Activated B cell treated with CpG ODN at 0.5 μM for 24 hours (primary cell): ENCODE measurements at regions of chr3 and their contacts with region 1.

Region 1: DNA sequence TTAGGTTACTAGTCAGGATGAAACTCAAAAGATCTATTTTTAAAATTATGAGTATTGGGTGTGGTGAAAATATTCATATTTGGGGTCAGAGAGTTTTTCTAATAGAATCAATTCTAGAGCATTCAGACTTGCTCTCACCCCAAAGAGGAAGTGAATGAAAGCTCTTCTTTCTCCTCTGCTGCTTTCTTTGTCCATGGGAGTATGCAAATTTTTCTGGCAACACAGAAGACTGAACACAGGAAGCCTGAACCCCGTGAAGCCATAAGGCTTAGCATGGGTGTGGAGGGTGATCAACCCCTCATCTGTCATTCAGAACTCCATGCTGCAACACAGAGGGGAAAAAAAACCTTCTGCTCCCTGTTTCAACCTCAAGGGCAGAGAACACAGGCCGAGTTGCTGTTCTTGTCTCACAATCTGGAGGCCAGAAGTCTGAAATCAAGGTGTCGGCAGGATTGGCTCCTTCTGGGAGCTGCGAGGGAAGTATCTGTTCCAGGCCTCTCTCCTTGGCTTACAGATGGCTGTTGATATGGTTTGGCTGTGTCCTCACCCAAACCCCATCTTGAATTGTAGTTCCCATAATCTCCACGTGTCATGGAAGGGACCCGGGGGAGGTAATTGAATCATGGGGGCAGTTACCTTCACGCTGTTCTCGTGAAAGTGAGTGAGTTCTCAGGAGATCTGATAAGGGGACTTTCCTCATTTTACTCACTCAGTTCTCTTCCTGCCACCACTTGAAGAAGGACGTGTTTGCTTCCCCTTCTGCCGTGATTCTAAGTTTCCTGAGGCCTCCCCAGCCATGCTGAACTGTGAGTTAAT is 33.7 kb upstream of the CD47 start:
- DNase-seq: peak; percentile 61
- ATAC-seq: peak; percentile 64
- H3K4me3 Mint-ChIP-seq: peak overlapping the region; percentile 83
- H3K27ac Mint-ChIP-seq: peak overlapping the region; percentile 100
- H3K4me1 Mint-ChIP-seq: peaks cover 91% of the 10 kb centered on the region
- H3K27me3 Mint-ChIP-seq: no peaks in the 10 kb centered on the region
- CTCF ChIP-seq: no peak

Region 2: DNA sequence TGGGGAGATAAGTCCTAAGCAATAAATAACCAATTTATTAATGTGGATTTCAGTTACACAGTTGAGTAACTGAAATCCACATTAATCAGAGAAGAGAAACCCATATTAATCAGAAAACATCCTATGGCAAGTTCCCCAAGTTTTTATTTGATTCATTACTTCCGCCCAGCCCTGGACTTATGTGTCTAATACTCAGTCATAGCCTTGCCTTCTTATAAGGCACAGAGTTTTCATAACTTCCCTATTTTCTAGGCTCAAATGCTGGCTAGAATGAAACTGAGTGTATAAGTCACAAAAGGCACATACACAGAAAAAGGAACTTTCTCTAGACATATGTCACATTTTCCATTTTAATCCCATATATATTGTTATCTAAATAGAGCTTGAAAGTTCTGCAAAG is 62.5 kb before region 1 on chr3:
- CTCF ChIA-PET with region 1: interaction called, 4 read pairs
- POLR2A ChIA-PET with region 1: interaction called, 8 read pairs
- intact Hi-C with region 1: loop called (anchors 1 kb)
- DNase-seq: no peak
- ATAC-seq: peak; percentile 93
- H3K4me3 Mint-ChIP-seq: peak overlapping the region; percentile 11
- H3K27ac Mint-ChIP-seq: peak overlapping the region; percentile 66
- H3K4me1 Mint-ChIP-seq: peaks cover 81% of the 10 kb centered on the region
- H3K27me3 Mint-ChIP-seq: no peaks in the 10 kb centered on the region
- CTCF ChIP-seq: no peak

Region 3: DNA sequence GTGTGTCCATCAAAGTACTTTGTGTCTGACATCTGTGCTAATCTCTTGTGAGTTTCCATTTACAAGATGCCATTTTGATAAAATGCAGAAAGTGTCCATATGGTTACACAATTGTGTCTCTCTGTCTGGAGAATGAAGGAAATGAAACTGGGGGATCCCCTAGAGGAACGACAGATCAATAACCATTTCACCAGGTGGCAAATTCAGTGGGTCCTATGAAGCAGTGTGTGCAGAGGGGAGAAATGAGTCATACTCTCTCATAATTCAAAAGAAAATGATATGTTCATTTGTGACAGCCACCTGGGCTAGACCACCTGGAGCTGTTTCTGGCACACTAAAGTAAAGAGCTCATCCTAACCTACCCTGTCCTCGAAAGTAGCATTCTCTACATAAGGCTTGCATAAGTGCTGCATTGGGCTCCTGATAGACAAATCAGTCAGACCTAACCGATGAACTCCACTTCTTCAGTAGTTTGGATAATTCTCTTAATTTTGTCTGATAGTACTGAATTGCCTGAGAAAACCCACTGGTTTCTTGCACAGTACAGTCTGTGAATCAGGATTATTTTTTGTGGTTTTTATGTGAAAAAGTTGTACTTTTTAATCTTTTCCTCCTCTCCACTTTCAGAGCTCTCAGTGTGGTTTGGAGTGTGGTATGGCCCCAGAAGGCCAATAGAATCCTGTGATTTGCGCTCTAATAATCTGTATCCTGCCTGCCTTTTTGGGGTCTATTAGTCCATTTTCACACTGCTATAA is 23.5 kb before region 1 on chr3:
- CTCF ChIA-PET with region 1: interaction called, 5 read pairs
- POLR2A ChIA-PET with region 1: interaction called, 188 read pairs
- intact Hi-C with region 1: loop called (anchors 1 kb)
- DNase-seq: no peak
- ATAC-seq: peak; percentile 82
- H3K4me3 Mint-ChIP-seq: peak overlapping the region; percentile 61
- H3K27ac Mint-ChIP-seq: peak overlapping the region; percentile 87
- H3K4me1 Mint-ChIP-seq: peaks cover 71% of the 10 kb centered on the region
- H3K27me3 Mint-ChIP-seq: no peaks in the 10 kb centered on the region
- CTCF ChIP-seq: no peak

Region 4: DNA sequence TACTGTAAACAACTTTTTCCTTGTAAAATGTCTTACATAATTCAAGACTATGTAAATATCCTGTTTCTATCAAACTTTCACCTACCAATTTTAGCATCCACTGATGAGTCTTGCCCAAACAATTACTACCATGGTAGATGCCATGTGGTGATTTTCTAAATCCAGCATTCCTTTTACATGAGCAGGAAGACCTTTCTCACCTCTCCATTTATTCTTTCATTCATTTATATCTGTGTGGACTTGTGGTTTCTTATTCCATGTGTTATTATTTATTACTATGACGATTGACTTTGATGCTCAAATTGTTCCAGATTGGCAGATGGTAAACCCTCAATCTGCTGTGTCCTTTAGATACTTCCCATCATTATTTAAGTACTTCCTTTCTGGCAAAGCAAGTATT is 35.3 kb after region 1 on chr3:
- CTCF ChIA-PET with region 1: no interaction called
- POLR2A ChIA-PET with region 1: interaction called, 8 read pairs
- intact Hi-C with region 1: loop called (anchors 5 kb)
- DNase-seq: no peak
- ATAC-seq: no peak
- H3K4me3 Mint-ChIP-seq: no peak overlapping the region
- H3K27ac Mint-ChIP-seq: peak overlapping the region; percentile 50
- H3K4me1 Mint-ChIP-seq: peaks cover 39% of the 10 kb centered on the region
- H3K27me3 Mint-ChIP-seq: no peaks in the 10 kb centered on the region
- CTCF ChIP-seq: no peak

Region 5: DNA sequence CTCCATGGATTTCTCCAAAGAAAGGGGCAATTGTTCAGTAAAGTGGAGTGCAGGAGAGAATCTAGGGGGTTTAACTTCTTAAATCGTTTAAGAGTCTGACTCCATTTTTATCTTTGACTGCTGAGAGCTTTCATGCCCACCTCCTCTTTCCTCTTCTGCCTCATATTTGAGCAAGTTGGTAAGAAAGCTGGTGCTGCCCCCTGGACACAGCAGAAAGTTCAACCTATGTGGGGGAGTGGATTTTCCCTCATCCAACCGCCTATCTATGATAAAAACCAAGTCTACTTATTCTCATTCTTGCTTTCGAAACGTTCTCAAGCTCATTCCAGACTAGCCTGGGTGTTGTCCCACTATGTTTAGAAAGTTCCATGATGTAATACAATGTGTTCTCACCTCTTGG is 197.8 kb after region 1 on chr3:
- CTCF ChIA-PET with region 1: interaction called, 4 read pairs
- POLR2A ChIA-PET with region 1: interaction called, 8 read pairs
- intact Hi-C with region 1: loop called (anchors 1 kb)
- DNase-seq: no peak
- ATAC-seq: peak; percentile 91
- H3K4me3 Mint-ChIP-seq: no peak overlapping the region
- H3K27ac Mint-ChIP-seq: peak overlapping the region; percentile 57
- H3K4me1 Mint-ChIP-seq: peaks cover 14% of the 10 kb centered on the region
- H3K27me3 Mint-ChIP-seq: no peaks in the 10 kb centered on the region
- CTCF ChIP-seq: no peak

Region 6: GRCh38 chr3:109316162-109316730 is 1191.7 kb after region 1 on chr3 and contains the start of gene DPPA2:
- CTCF ChIA-PET with region 1: no interaction called
- POLR2A ChIA-PET with region 1: no interaction called
- intact Hi-C with region 1: no loop called
- DNase-seq: no peak
- ATAC-seq: no peak
- H3K4me3 Mint-ChIP-seq: no peak within 1 kb of the TSS
- H3K27ac Mint-ChIP-seq: no peak within 1 kb of the TSS
- H3K4me1 Mint-ChIP-seq: no peaks in the 10 kb centered on the region
- H3K27me3 Mint-ChIP-seq: no peaks in the 10 kb centered on the region
- CTCF ChIP-seq: no peak
- total RNA-seq, gene DPPA2: not detected in 2 replicates